ENCODE measurements at regions of chr9 and their contacts with region 1.

Region 1: GRCh38 chr9:97921959-97922724 is at the start of gene TRMO:
- DNase-seq: peak; percentile 98
- ATAC-seq: peak; percentile 88
- H3K4me3 ChIP-seq: peak within 1 kb of the TSS; percentile 67
- H3K27ac ChIP-seq: peak within 1 kb of the TSS; percentile 91
- H3K4me1 ChIP-seq: peaks cover 4 to 17% of the 10 kb centered on the region in 2 experiments; a peak in 3 of 4 replicates
- H3K27me3 ChIP-seq: no peaks in the 10 kb centered on the region
- CTCF ChIP-seq: peak; percentile 26 to 78 (median 71); a peak in 4 of 6 replicates
- POLR2A ChIP-seq: peak; percentile 97
- RAD21 ChIP-seq: peak; percentile 65
- total RNA-seq, gene TRMO: 10.2 TPM

Region 2: GRCh38 chr9:97710356-97711222 is 211.6 kb before region 1 on chr9:
- CTCF ChIA-PET with region 1: no interaction called
- POLR2A ChIA-PET with region 1: no interaction called
- RAD21 ChIA-PET with region 1: no interaction called
- intact Hi-C with region 1: loop called (anchors 1 kb)
- DNase-seq: peak; percentile 47
- ATAC-seq: peak; percentile 88
- H3K4me3 ChIP-seq: no peak overlapping the region
- H3K27ac ChIP-seq: no peak overlapping the region
- H3K4me1 ChIP-seq: peaks cover 11 to 13% of the 10 kb centered on the region in 2 experiments
- H3K27me3 ChIP-seq: no peaks in the 10 kb centered on the region
- CTCF ChIP-seq: peak; percentile 71 to 89 (median 82)
- POLR2A ChIP-seq: no peak
- RAD21 ChIP-seq: peak; percentile 95

Region 3: DNA sequence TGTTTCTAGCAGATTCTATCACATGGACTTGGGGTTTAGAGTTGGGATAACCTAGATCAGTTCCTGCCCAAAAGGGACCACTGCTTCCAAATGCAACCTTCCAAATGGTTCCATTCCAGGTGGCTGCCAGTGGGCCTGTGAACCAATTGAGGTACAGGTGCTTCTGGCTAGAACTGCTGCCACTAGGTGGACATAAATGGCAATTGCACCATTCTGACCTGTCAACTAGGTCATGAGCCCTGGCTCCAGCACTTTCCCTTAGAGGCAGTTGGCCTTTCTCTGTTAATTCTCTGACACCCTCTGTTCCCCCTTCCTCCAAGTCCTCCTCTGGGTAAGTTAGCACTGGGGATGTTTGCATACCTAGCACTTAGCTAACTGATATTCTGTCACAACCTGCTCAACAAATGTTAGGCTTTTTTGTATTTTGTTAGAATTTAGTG is 32.4 kb after region 1 on chr9:
- CTCF ChIA-PET with region 1: interaction called, 7 read pairs
- POLR2A ChIA-PET with region 1: interaction called, 3 read pairs
- RAD21 ChIA-PET with region 1: no interaction called
- intact Hi-C with region 1: loop called (anchors 1 kb)
- DNase-seq: peak; percentile 59
- ATAC-seq: peak; percentile 99
- H3K4me3 ChIP-seq: no peak overlapping the region
- H3K27ac ChIP-seq: no peak overlapping the region
- H3K4me1 ChIP-seq: peaks cover 0 to 5% of the 10 kb centered on the region in 2 experiments; a peak in 1 of 4 replicates
- H3K27me3 ChIP-seq: no peaks in the 10 kb centered on the region
- CTCF ChIP-seq: peak; percentile 74 to 86 (median 78)
- POLR2A ChIP-seq: no peak
- RAD21 ChIP-seq: peak; percentile 64

Region 4: GRCh38 chr9:97982683-97983588 is 60.8 kb after region 1 on chr9 and contains the start of gene ANP32B:
- CTCF ChIA-PET with region 1: interaction called, 7 read pairs
- POLR2A ChIA-PET with region 1: interaction called, 3 read pairs
- RAD21 ChIA-PET with region 1: interaction called in 1 of 2 experiments, 4 read pairs
- intact Hi-C with region 1: loop called (anchors 2 kb)
- DNase-seq: peak; percentile 53
- ATAC-seq: peak; percentile 87
- H3K4me3 ChIP-seq: peak within 1 kb of the TSS; percentile 75 to 86
- H3K27ac ChIP-seq: peak within 1 kb of the TSS; percentile 98
- H3K4me1 ChIP-seq: peaks cover 16 to 47% of the 10 kb centered on the region in 2 experiments
- H3K27me3 ChIP-seq: no peaks in the 10 kb centered on the region
- CTCF ChIP-seq: peak; percentile 32 to 65 (median 59); a peak in 5 of 6 replicates
- POLR2A ChIP-seq: no peak
- RAD21 ChIP-seq: no peak
- total RNA-seq, gene ANP32B: 206 TPM

Region 5: DNA sequence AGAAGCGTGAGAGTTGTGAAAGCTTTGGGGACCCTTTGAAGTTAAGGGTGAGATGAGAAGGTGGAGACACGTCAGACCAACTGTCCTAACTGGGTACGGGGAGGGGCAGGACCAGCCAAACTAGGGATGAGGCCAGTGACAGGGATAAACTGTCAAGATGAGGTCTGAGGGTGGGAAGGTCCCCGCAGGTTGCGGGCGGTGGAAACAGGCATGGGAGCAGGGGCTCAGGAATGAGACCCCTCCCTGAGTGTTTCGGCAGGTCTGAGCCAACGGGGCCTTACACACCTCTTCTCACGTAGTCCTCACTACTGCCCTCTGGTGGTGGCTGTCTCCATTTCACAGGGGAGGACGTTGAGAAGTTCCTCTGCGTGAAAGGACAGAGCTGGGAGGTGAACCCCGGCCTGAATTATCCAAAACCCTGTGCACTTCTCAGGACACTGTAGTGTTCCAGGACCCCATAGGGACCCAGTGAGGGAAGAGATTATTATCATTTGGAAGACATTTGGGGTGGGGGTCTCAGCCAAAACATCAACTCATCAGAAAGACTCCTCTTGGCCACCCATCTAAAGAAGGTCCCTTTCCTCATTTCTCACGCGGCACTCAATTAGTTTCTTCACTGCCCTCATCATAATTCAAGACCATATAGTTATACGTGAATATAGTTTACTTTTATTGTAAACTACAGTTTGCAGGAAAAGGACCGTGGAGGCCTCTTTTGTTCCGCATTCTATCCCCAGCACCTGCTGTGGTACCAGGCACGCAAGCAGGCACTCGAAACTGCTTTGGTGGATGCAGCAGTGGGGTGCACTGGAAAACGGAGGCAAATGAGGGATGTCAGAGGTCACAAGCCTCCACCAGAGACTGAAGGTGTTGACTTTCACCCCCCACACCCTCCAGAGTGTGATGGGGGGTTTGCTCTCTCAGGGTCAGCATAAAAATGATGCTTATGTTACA is 112.7 kb after region 1 on chr9:
- CTCF ChIA-PET with region 1: interaction called, 20 read pairs
- POLR2A ChIA-PET with region 1: no interaction called
- RAD21 ChIA-PET with region 1: no interaction called
- intact Hi-C with region 1: loop called (anchors 1 kb)
- DNase-seq: peak; percentile 76
- ATAC-seq: peak; percentile 97
- H3K4me3 ChIP-seq: 0 out of 4 replicates have a peak overlapping the region, but pooled peaks of 1 of the 2 experiments have one; percentile 4
- H3K27ac ChIP-seq: no peak overlapping the region
- H3K4me1 ChIP-seq: peaks cover 0 to 31% of the 10 kb centered on the region in 2 experiments; a peak in 2 of 4 replicates
- H3K27me3 ChIP-seq: no peaks in the 10 kb centered on the region
- CTCF ChIP-seq: peak; percentile 64 to 89 (median 85)
- POLR2A ChIP-seq: no peak
- RAD21 ChIP-seq: peak; percentile 49

Region 6: GRCh38 chr9:98045234-98046179 is 123.4 kb after region 1 on chr9:
- CTCF ChIA-PET with region 1: interaction called, 6 read pairs
- POLR2A ChIA-PET with region 1: interaction called, 5 read pairs
- RAD21 ChIA-PET with region 1: no interaction called
- intact Hi-C with region 1: loop called (anchors 2 kb)
- DNase-seq: peak; percentile 87
- ATAC-seq: peak; percentile 90
- H3K4me3 ChIP-seq: peak overlapping the region; percentile 76 to 80
- H3K27ac ChIP-seq: peak overlapping the region; percentile 57
- H3K4me1 ChIP-seq: peaks cover 4 to 24% of the 10 kb centered on the region in 2 experiments; a peak in 3 of 4 replicates
- H3K27me3 ChIP-seq: no peaks in the 10 kb centered on the region
- CTCF ChIP-seq: peak in 2 of 3 experiments; percentile 27 to 34; a peak in 1 of 6 replicates
- POLR2A ChIP-seq: peak; percentile 93
- RAD21 ChIP-seq: no peak

Region 7: GRCh38 chr9:98263482-98264357 is 341.6 kb after region 1 on chr9:
- CTCF ChIA-PET with region 1: interaction called, 3 read pairs
- POLR2A ChIA-PET with region 1: no interaction called
- RAD21 ChIA-PET with region 1: no interaction called
- intact Hi-C with region 1: loop called (anchors 1 kb)
- DNase-seq: peak; percentile 69
- ATAC-seq: peak; percentile 100
- H3K4me3 ChIP-seq: no peak overlapping the region
- H3K27ac ChIP-seq: no peak overlapping the region
- H3K4me1 ChIP-seq: no peaks in the 10 kb centered on the region
- H3K27me3 ChIP-seq: no peaks in the 10 kb centered on the region
- CTCF ChIP-seq: peak; percentile 92 to 96 (median 96)
- POLR2A ChIP-seq: no peak
- RAD21 ChIP-seq: peak; percentile 98